Common myeloid progenitor, CD34-positive (primary cell): ENCODE measurements at regions of chr7 and their contacts with region 1.

Region 1: GRCh38 chr7:29189743-29190201 is 4.8 kb upstream of the CHN2 start:
- DNase-seq: peak; percentile 57 to 66 (median 65)
- H3K4me3 ChIP-seq: peak overlapping the region in 2 of 7 experiments; percentile 28 to 52
- H3K27ac ChIP-seq: no peak overlapping the region
- H3K4me1 ChIP-seq: peaks cover 0 to 18% (median 7%) of the 10 kb centered on the region in 4 experiments
- H3K27me3 ChIP-seq: peaks cover 0 to 4% (median 0%) of the 10 kb centered on the region in 5 experiments

Region 2: DNA sequence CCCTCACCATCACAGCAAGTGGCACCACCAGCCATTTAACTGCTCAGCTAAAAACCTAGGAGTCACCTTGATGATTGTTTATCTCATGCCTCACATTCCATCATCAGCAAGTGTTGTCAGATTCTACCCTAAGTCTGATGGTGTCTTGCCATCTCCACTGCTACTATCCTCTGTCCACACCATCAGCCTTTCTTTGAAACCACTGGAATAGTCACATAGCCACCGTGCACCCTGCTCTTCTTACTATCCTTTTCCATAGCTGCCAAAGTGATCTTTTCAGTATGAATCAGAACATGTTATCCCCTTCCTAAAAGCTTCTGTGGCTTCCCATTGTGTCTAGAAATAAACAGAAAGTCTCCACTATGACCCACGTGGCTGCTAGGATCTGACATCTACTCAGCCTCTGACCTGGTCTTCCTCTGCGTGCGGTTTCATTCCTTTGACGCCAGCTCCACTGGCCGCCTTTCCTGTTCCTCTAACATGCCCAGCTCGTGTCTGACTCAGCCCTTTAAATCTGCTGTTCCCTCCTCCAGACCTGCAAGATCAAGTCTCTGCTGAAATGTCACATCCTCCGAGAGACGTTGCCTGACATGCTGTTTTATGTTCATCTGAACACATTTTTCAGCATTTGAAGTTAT is 11.7 kb before region 1 on chr7:
- CTCF ChIA-PET with region 1: interaction called, 28 read pairs
- POLR2A ChIA-PET with region 1: no interaction called
- DNase-seq: peak; percentile 74 to 90 (median 83)
- H3K4me3 ChIP-seq: peak overlapping the region in 2 of 7 experiments; percentile 35 to 37
- H3K27ac ChIP-seq: no peak overlapping the region
- H3K4me1 ChIP-seq: peaks cover 0 to 9% (median 8%) of the 10 kb centered on the region in 4 experiments
- H3K27me3 ChIP-seq: no peaks in the 10 kb centered on the region

Region 3: GRCh38 chr7:29207162-29207801 is 17.5 kb after region 1 on chr7:
- CTCF ChIA-PET with region 1: interaction called, 12 read pairs
- POLR2A ChIA-PET with region 1: interaction called, 5 read pairs
- DNase-seq: peak in 2 of 3 donors; percentile 66 to 79
- H3K4me3 ChIP-seq: no peak overlapping the region
- H3K27ac ChIP-seq: no peak overlapping the region
- H3K4me1 ChIP-seq: peaks cover 0 to 19% (median 12%) of the 10 kb centered on the region in 4 experiments
- H3K27me3 ChIP-seq: no peaks in the 10 kb centered on the region

Region 4: GRCh38 chr7:29239638-29240037 is 49.9 kb after region 1 on chr7:
- CTCF ChIA-PET with region 1: interaction called, 26 read pairs
- POLR2A ChIA-PET with region 1: no interaction called
- DNase-seq: peak; percentile 40 to 53 (median 46)
- H3K4me3 ChIP-seq: no peak overlapping the region
- H3K27ac ChIP-seq: no peak overlapping the region
- H3K4me1 ChIP-seq: peaks cover 6 to 15% (median 13%) of the 10 kb centered on the region in 4 experiments
- H3K27me3 ChIP-seq: no peaks in the 10 kb centered on the region

Region 5: GRCh38 chr7:29309041-29309854 is 119.5 kb after region 1 on chr7:
- CTCF ChIA-PET with region 1: interaction called, 17 read pairs
- POLR2A ChIA-PET with region 1: no interaction called
- DNase-seq: peak in 2 of 3 donors; percentile 28 to 37
- H3K4me3 ChIP-seq: no peak overlapping the region
- H3K27ac ChIP-seq: no peak overlapping the region
- H3K4me1 ChIP-seq: peaks cover 0 to 3% (median 1%) of the 10 kb centered on the region in 4 experiments
- H3K27me3 ChIP-seq: no peaks in the 10 kb centered on the region

Region 6: GRCh38 chr7:29345600-29345999 is 155.8 kb after region 1 on chr7:
- CTCF ChIA-PET with region 1: interaction called, 85 read pairs
- POLR2A ChIA-PET with region 1: interaction called, 3 read pairs
- DNase-seq: peak; percentile 54 to 70 (median 67)
- H3K4me3 ChIP-seq: no peak overlapping the region
- H3K27ac ChIP-seq: no peak overlapping the region
- H3K4me1 ChIP-seq: peaks cover 18 to 48% (median 38%) of the 10 kb centered on the region in 4 experiments
- H3K27me3 ChIP-seq: no peaks in the 10 kb centered on the region